ENCODE measurements at regions of chr3 and their contacts with region 1.

Region 1: GRCh38 chr3:172332256-172333041 is 115.8 kb downstream of the GHSR start:
- DNase-seq: no peak
- H3K4me3 ChIP-seq: no peak overlapping the region
- H3K27me3 ChIP-seq: no peaks in the 10 kb centered on the region
- CTCF ChIP-seq: peak; percentile 91

Region 2: DNA sequence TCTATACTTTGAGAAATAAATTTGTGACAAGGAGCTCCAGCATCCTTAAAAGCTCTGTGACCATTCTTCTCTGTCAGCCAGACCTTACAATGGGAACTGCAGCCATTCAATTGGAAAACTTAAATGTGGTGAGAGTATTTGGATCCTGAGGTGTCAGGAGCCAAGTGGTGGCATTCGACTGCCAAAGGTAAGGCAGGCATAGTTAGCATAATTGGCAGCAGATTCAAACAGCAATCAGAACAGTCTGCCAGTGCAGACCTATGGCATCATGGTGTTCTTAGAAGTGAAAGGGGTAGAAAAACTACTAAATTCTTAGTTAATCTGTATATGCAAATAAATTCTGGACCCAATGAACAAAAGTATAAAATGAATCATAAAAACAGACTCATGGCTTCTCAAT is 311.3 kb before region 1 on chr3:
- CTCF ChIA-PET with region 1: no interaction called
- POLR2A ChIA-PET with region 1: no interaction called
- DNase-seq: no peak
- H3K4me3 ChIP-seq: no peak overlapping the region
- H3K27me3 ChIP-seq: no peaks in the 10 kb centered on the region
- CTCF ChIP-seq: no peak

Region 3: DNA sequence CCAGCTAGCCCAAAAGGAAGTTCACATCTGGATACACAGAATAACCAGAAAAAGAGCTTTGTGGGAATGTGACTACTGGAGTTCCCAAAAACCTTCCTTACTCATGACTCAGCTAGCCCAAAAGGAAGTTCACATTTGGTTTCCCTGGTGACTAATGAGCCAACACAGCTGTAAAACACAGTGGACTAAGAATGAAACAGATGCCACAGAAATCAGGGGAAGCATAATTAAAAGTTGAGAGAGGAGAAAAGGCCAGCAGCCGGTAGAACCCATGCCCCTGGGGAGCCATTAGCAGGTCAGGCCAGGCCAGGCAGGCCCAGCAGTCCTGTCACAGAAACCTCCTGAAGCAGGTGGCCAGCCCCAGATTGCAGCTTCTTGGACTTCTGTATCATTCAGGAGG is 14.5 kb before region 1 on chr3:
- CTCF ChIA-PET with region 1: interaction called, 30 read pairs
- POLR2A ChIA-PET with region 1: no interaction called
- DNase-seq: peak; percentile 94
- H3K4me3 ChIP-seq: no peak overlapping the region
- H3K27me3 ChIP-seq: no peaks in the 10 kb centered on the region
- CTCF ChIP-seq: no peak